Right ventricle myocardium superior (tissue), 1 donor: ENCODE measurements at regions of chr11 and their contacts with region 1.

Region 1: DNA sequence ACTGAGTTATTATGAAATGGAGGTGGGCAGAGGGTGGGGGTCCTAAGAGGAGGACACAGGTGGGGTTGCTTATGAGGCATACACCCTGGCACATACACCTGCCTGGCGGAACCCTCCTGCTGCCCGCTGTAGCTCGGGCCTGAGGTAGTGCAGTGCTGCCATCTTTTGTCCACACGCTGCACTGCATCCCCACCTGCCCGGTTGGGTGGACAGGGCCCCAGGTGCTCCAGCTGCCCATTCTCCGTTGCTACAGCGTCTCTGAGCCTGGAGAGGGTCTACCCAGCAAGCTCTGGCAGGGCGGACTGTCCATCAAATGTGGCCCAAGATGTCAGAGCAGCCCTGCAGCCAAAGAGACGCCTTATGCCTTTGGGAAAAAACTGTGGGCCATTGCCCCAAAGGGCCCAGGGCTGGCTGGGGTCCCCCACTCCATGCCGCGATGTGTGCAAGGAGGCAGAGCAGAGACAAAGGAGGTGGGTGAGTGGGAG is 131.2 kb downstream of the BUD13 start:
- DNase-seq: peak; percentile 48
- ATAC-seq: peak; percentile 83

Region 2: DNA sequence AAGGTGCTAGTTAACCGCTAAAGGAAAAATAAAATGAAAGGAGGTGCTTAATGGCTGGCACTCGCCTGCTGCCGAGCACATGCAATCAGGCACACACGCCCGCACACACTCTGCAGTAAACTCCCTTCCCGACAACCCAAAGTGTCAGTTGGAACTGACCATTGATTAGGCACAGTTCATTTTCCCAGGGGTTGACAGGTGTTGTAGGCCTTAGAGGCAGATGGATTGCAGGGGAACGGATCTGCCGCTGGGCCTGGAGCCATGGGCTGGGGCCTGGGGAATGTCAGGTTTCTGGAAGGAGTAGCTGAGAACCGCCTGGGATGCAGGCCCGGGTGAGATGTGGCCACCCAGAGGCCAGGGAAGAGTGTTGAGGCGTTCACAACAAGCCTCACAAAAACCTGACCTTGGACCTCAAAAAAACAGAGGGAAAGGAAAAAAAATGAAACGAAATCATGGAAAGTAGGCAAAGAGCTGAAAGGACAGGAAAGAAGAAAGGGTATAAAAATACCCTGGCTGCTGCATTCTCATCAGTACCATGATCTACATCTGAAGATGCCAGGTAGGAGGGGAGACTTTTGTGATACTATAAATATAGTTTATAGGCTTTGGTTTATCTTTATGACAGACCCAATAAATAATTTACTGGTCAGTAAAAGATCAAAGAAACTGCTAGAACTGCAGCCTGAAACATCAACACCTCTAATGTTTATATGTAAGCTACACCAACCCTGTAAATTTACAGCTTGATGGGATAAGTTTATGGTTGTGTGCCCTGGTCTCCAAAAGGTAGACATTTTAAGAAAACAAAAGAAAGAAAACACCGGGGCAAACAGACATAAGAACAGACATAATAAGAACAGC is 182.2 kb before region 1 on chr11:
- intact Hi-C with region 1: loop called (anchors 5 kb)
- DNase-seq: peak; percentile 42
- ATAC-seq: peak; percentile 45

Region 3: DNA sequence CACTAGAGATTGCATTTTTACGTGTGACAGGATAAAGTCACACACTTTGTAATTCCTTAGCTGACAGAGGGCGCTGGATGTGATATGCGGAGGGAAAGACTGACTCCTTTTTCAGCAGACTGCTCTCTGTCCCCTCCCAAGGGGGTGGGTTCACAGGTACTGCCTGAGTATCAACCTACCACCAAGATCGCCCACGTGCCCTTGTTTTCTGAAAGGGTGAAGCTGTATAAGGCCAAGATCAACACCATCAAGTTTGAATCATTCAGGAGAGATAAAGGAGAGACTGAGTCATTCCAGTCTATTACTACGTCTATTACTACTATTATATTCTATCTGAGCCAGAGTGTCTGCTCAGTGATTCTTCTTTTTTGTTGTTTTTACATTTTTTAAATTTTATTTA is 100.5 kb after region 1 on chr11:
- intact Hi-C with region 1: no loop called
- DNase-seq: no peak
- ATAC-seq: no peak